A549 (cell line): ENCODE measurements at regions of chr7 and their contacts with region 1.

Region 1: DNA sequence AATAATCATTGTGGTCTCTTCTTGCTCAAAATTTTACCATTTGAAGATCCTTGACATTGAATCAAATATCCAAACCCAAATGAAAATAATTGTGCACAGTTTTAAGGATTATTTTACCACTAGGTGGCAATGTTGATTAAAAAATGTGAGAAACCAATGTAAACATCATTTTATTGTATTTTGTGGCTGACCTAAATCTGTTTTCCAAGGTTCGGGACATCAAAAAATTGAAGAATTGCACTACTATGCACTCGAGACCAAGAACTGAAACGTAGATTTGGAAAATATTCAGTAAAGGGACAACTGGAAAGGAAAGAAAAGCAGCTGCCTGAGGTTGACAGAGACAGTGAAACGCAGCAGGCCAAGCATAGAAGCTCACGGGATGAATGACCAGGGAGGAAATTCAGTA is 259.3 kb downstream of the SNX13 start:
- DNase-seq: peak in 1 of 2 experiments; percentile 20
- ATAC-seq: peak; percentile 33 to 59; a peak in 3 of 6 replicates
- H3K4me3 ChIP-seq: no peak overlapping the region
- H3K27ac ChIP-seq: peak overlapping the region; percentile 81 to 87
- H3K4me1 ChIP-seq: peaks cover 61% of the 10 kb centered on the region
- CTCF ChIP-seq: peak; percentile 82
- EP300 ChIP-seq: no peak
- POLR2A ChIP-seq: no peak
- RAD21 ChIP-seq: peak; percentile 83 to 94

Region 2: GRCh38 chr7:17696443-17696842 is 15.5 kb after region 1 on chr7:
- CTCF ChIA-PET with region 1: interaction called, 77 read pairs
- POLR2A ChIA-PET with region 1: interaction called, 3 read pairs
- DNase-seq: peak; percentile 70 to 93
- ATAC-seq: peak; percentile 100
- H3K4me3 ChIP-seq: no peak overlapping the region
- H3K27ac ChIP-seq: peak overlapping the region; percentile 92 to 93
- H3K4me1 ChIP-seq: peaks cover 24% of the 10 kb centered on the region
- CTCF ChIP-seq: no peak
- EP300 ChIP-seq: peak; percentile 96 to 97
- POLR2A ChIP-seq: no peak
- RAD21 ChIP-seq: peak in 1 of 2 experiments; percentile 62; a peak in 3 of 5 replicates

Region 3: DNA sequence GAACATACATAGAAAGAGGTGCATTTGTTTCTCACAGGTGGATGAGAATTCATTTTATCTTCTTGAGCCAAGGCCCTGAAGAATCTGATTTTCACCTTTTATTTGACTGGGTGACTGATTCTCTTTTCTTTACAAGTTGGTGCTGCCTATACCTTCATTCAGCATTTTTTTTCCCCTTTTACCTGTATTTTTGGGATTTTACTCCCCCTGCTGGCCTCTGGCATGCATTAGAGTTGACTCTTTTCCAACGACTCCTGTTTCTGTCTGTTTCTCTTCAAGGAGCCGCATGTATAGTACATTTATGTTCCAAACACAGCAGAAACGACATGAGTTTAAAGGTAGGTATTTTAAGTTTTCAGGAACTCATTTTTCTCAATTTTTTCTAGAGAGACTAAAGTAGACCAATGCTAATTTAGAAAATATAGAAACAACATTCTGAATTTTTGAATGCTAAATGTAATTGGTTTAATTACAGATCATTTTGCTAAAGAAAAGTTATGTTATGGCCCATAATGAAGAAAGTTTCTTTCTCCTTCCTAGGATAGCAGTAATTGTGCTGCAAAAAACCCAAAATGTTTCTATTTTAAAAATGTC is 664.8 kb after region 1 on chr7:
- CTCF ChIA-PET with region 1: interaction called, 30 read pairs
- POLR2A ChIA-PET with region 1: no interaction called
- DNase-seq: peak; percentile 5 to 48
- ATAC-seq: peak; percentile 78 to 81
- H3K4me3 ChIP-seq: no peak overlapping the region
- H3K27ac ChIP-seq: no peak overlapping the region
- H3K4me1 ChIP-seq: no peaks in the 10 kb centered on the region
- CTCF ChIP-seq: peak; percentile 91
- EP300 ChIP-seq: no peak
- POLR2A ChIP-seq: no peak
- RAD21 ChIP-seq: peak; percentile 85 to 88